ENCODE measurements at regions of chr19 and their contacts with region 1.

Region 1: GRCh38 chr19:36214386-36215275 is at the starts of genes ZNF146 and ZNF565:
- DNase-seq: peak; percentile 98
- ATAC-seq: peak; percentile 89
- H3K4me3 ChIP-seq: peak within 1 kb of the TSS; percentile 70 to 99 (median 85)
- H3K4me3 Mint-ChIP-seq: no peak within 1 kb of the TSS
- H3K27ac ChIP-seq: peak within 1 kb of the TSS; percentile 87 to 97
- H3K27ac Mint-ChIP-seq: peak within 1 kb of the TSS; percentile 41
- H3K4me1 ChIP-seq: peaks cover 13 to 21% of the 10 kb centered on the region in 2 donors
- H3K4me1 Mint-ChIP-seq: peaks cover 19% of the 10 kb centered on the region
- H3K27me3 ChIP-seq: no peaks in the 10 kb centered on the region
- H3K27me3 Mint-ChIP-seq: no peaks in the 10 kb centered on the region
- CTCF ChIP-seq: no peak
- total RNA-seq, gene ZNF146: 62.2 and 69.3 TPM in 2 replicates
- total RNA-seq, gene ZNF565: 5.2 and 5.5 TPM in 2 replicates

Region 2: GRCh38 chr19:35740423-35741202 is 474.0 kb before region 1 on chr19:
- CTCF ChIA-PET with region 1: no interaction called
- POLR2A ChIA-PET with region 1: no interaction called
- intact Hi-C with region 1: loop called (anchors 10 kb)
- DNase-seq: peak; percentile 95
- ATAC-seq: peak; percentile 64
- H3K4me3 ChIP-seq: peak overlapping the region; percentile 60 to 93 (median 83)
- H3K4me3 Mint-ChIP-seq: peak overlapping the region; percentile 96
- H3K27ac ChIP-seq: peak overlapping the region; percentile 59 to 73
- H3K27ac Mint-ChIP-seq: peak overlapping the region; percentile 92
- H3K4me1 ChIP-seq: peaks cover 34 to 64% of the 10 kb centered on the region in 2 donors
- H3K4me1 Mint-ChIP-seq: peaks cover 57% of the 10 kb centered on the region
- H3K27me3 ChIP-seq: no peaks in the 10 kb centered on the region
- H3K27me3 Mint-ChIP-seq: no peaks in the 10 kb centered on the region
- CTCF ChIP-seq: no peak

Region 3: GRCh38 chr19:36014029-36014924 is 200.4 kb before region 1 on chr19 and contains the start of gene ALKBH6:
- CTCF ChIA-PET with region 1: no interaction called
- POLR2A ChIA-PET with region 1: no interaction called
- intact Hi-C with region 1: loop called (anchors 1 kb)
- DNase-seq: peak; percentile 98
- ATAC-seq: peak; percentile 99
- H3K4me3 ChIP-seq: peak within 1 kb of the TSS; percentile 67 to 94 (median 72)
- H3K4me3 Mint-ChIP-seq: peak within 1 kb of the TSS; percentile 99
- H3K27ac ChIP-seq: peak within 1 kb of the TSS; percentile 70 to 86
- H3K27ac Mint-ChIP-seq: peak within 1 kb of the TSS; percentile 93
- H3K4me1 ChIP-seq: peaks cover 16 to 21% of the 10 kb centered on the region in 2 donors
- H3K4me1 Mint-ChIP-seq: peaks cover 28% of the 10 kb centered on the region
- H3K27me3 ChIP-seq: peaks cover 0 to 6% (median 0%) of the 10 kb centered on the region in 4 experiments
- H3K27me3 Mint-ChIP-seq: no peaks in the 10 kb centered on the region
- CTCF ChIP-seq: no peak
- total RNA-seq, gene ALKBH6: 49.4 and 54.5 TPM in 2 replicates

Region 4: DNA sequence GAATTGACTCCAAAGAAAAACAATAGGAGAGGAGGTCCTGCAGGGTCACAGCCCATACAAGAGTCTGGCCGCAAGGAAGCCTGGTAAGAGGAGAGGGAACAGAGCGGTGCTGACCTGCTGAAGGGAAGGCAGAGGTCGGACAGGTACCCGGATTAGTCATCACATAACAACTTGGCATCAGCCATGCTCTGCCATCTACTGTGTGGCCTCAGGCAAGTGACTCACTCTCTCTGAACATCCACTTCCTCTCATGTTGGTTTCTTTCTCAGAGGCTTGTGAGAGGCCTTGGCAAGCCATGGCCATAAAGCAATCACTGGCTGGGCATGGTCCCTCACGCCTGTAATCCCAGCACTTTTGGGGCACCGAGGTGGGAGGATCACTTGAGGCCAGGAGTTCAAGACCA is 82.1 kb before region 1 on chr19:
- CTCF ChIA-PET with region 1: interaction called, 20 read pairs
- POLR2A ChIA-PET with region 1: interaction called, 4 read pairs
- intact Hi-C with region 1: no loop called
- DNase-seq: no peak
- ATAC-seq: no peak
- H3K4me3 ChIP-seq: no peak overlapping the region
- H3K4me3 Mint-ChIP-seq: no peak overlapping the region
- H3K27ac ChIP-seq: no peak overlapping the region
- H3K27ac Mint-ChIP-seq: no peak overlapping the region
- H3K4me1 ChIP-seq: peaks cover 7 to 28% of the 10 kb centered on the region in 2 donors
- H3K4me1 Mint-ChIP-seq: peaks cover 15% of the 10 kb centered on the region
- H3K27me3 ChIP-seq: no peaks in the 10 kb centered on the region
- H3K27me3 Mint-ChIP-seq: no peaks in the 10 kb centered on the region
- CTCF ChIP-seq: no peak

Region 5: GRCh38 chr19:36198119-36198518 is 16.5 kb before region 1 on chr19:
- CTCF ChIA-PET with region 1: interaction called, 3 read pairs
- POLR2A ChIA-PET with region 1: interaction called, 10 read pairs
- intact Hi-C with region 1: no loop called
- DNase-seq: no peak
- ATAC-seq: no peak
- H3K4me3 ChIP-seq: no peak overlapping the region
- H3K4me3 Mint-ChIP-seq: no peak overlapping the region
- H3K27ac ChIP-seq: no peak overlapping the region
- H3K27ac Mint-ChIP-seq: no peak overlapping the region
- H3K4me1 ChIP-seq: peaks cover 0 to 6% of the 10 kb centered on the region in 2 donors
- H3K4me1 Mint-ChIP-seq: peaks cover 4% of the 10 kb centered on the region
- H3K27me3 ChIP-seq: no peaks in the 10 kb centered on the region
- H3K27me3 Mint-ChIP-seq: no peaks in the 10 kb centered on the region
- CTCF ChIP-seq: no peak

Region 6: DNA sequence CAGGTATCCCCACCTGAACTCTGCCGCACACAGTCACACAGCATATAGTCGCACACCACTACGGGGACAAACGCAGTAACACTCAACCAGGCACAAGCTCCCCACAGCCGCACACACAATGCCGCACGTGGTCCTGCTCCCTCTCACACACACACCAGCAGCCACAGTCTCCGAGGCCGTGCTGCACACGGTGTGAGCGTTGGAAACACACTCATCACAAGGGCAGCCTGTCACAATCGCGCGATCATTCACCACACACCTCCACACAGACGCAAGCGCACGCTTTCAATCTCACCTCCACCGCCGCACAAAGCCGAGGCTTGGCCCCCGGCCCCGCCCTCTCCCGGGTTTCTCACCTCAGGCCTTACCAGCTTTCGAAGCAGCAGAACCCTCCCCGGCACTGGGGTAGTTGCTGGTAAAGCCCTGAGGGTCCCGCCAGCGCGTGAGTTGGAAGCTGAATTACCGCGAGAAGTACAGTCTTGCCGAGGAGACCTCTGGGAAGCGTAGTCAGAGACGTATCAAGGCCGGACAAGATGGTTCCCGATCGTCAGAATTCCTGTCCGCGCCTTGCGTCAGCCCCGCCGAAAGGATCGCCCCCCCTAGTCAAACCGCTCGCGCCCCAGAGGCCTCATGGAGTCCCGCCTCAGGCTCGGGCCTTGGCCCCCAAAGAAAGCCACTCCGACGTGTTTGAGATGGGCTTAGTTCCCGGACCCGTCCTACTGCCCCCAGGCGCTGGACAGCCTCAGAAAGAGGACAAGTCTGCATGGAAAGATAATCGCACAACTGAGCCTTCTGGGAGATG is 274.7 kb after region 1 on chr19 and contains the start of gene ZNF566:
- CTCF ChIA-PET with region 1: interaction called, 4 read pairs
- POLR2A ChIA-PET with region 1: interaction called, 6 read pairs
- intact Hi-C with region 1: loop called (anchors 1 kb)
- DNase-seq: peak; percentile 96
- ATAC-seq: peak; percentile 90
- H3K4me3 ChIP-seq: peak within 1 kb of the TSS; percentile 79 to 98 (median 90)
- H3K4me3 Mint-ChIP-seq: peak within 1 kb of the TSS; percentile 99
- H3K27ac ChIP-seq: peak within 1 kb of the TSS; percentile 85 to 86
- H3K27ac Mint-ChIP-seq: peak within 1 kb of the TSS; percentile 99
- H3K4me1 ChIP-seq: peaks cover 16 to 30% of the 10 kb centered on the region in 2 donors
- H3K4me1 Mint-ChIP-seq: peaks cover 41% of the 10 kb centered on the region
- H3K27me3 ChIP-seq: no peaks in the 10 kb centered on the region
- H3K27me3 Mint-ChIP-seq: no peaks in the 10 kb centered on the region
- CTCF ChIP-seq: no peak
- total RNA-seq, gene ZNF566: 26.0 and 26.6 TPM in 2 replicates

Measured in B cell (primary cell).